IMR-90 (cell line): ENCODE measurements at regions of chr21 and their contacts with region 1.

Region 1: GRCh38 chr21:29928537-29928936 is 11.3 kb downstream of the GRIK1 start:
- DNase-seq: no peak
- ATAC-seq: no peak
- H3K4me3 ChIP-seq: no peak overlapping the region
- H3K27ac ChIP-seq: no peak overlapping the region
- H3K4me1 ChIP-seq: no peaks in the 10 kb centered on the region
- H3K27me3 ChIP-seq: no peaks in the 10 kb centered on the region
- CTCF ChIP-seq: no peak
- POLR2A ChIP-seq: no peak
- RAD21 ChIP-seq: no peak

Region 2: GRCh38 chr21:29626801-29627470 is 301.6 kb before region 1 on chr21:
- CTCF ChIA-PET with region 1: no interaction called
- POLR2A ChIA-PET with region 1: no interaction called
- dilution Hi-C with region 1: no loop called
- in situ Hi-C with region 1: no loop called
- intact Hi-C with region 1: no loop called
- DNase-seq: no peak
- ATAC-seq: peak; percentile 50
- H3K4me3 ChIP-seq: no peak overlapping the region
- H3K27ac ChIP-seq: peak overlapping the region; percentile 60; the same call in 1 of the 2 replicates
- H3K4me1 ChIP-seq: peaks cover 5% of the 10 kb centered on the region
- H3K27me3 ChIP-seq: no peaks in the 10 kb centered on the region
- CTCF ChIP-seq: no peak
- POLR2A ChIP-seq: no peak
- RAD21 ChIP-seq: no peak

Region 3: GRCh38 chr21:29860346-29860745 is 68.2 kb before region 1 on chr21:
- CTCF ChIA-PET with region 1: no interaction called
- POLR2A ChIA-PET with region 1: no interaction called
- dilution Hi-C with region 1: no loop called
- in situ Hi-C with region 1: no loop called
- intact Hi-C with region 1: loop called (anchors 2 kb)
- DNase-seq: no peak
- ATAC-seq: no peak
- H3K4me3 ChIP-seq: no peak overlapping the region
- H3K27ac ChIP-seq: no peak overlapping the region
- H3K4me1 ChIP-seq: no peaks in the 10 kb centered on the region
- H3K27me3 ChIP-seq: peaks cover 3% of the 10 kb centered on the region
- CTCF ChIP-seq: no peak
- POLR2A ChIP-seq: no peak
- RAD21 ChIP-seq: no peak